Transverse colon (tissue), 4 donors: ENCODE measurements at regions of chr6 and their contacts with region 1.

Region 1: DNA sequence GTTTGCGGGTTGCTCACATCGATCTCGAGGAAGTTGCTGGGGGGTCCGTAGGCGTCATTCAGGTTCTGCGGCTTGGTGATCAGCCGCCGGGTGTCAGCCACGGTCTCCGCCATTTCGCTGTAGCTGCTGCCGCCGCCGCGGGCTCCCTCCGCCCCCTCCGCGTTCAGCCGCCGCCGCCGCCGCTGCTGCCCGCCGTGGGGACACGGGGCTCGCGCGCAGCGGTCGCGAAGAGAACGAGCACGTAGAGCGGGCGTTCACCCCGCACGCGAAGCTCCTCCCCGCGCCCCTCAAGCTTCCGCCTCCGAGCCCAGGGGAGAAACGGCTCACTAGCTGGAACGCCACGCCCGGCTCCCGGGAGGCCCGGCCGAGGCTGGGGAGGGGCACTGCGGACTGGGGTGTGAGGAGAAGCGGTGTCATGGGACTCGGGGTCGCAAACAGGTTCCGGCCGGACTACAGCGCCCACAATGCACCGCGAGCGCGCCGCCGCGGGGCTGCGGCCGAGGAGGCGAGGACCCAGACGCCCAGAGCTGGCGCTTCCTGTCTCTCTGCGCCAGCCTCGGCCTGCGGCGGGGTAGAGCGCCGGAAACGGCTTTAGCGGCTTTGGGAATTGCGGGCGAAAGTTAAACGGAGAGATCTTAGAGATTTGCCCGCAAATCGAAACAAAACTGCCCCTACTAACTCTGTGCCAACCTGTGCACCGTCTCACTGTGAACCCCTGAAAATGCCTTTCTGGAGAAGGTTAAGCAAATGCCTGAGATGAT is at the start of gene SNX3:
- DNase-seq: peak; percentile 98
- H3K4me3 ChIP-seq: peak within 1 kb of the TSS; percentile 60 to 99 (median 77)
- H3K27ac ChIP-seq: peak within 1 kb of the TSS; percentile 91 to 96 (median 94)
- H3K4me1 ChIP-seq: peaks cover 0 to 43% (median 17%) of the 10 kb centered on the region in 4 donors
- H3K27me3 ChIP-seq: no peaks in the 10 kb centered on the region
- CTCF ChIP-seq: no peak
- EP300 ChIP-seq: no peak
- POLR2A ChIP-seq: peak; percentile 81
- total RNA-seq, gene SNX3: 81.2 to 136 (median 121) TPM

Region 2: DNA sequence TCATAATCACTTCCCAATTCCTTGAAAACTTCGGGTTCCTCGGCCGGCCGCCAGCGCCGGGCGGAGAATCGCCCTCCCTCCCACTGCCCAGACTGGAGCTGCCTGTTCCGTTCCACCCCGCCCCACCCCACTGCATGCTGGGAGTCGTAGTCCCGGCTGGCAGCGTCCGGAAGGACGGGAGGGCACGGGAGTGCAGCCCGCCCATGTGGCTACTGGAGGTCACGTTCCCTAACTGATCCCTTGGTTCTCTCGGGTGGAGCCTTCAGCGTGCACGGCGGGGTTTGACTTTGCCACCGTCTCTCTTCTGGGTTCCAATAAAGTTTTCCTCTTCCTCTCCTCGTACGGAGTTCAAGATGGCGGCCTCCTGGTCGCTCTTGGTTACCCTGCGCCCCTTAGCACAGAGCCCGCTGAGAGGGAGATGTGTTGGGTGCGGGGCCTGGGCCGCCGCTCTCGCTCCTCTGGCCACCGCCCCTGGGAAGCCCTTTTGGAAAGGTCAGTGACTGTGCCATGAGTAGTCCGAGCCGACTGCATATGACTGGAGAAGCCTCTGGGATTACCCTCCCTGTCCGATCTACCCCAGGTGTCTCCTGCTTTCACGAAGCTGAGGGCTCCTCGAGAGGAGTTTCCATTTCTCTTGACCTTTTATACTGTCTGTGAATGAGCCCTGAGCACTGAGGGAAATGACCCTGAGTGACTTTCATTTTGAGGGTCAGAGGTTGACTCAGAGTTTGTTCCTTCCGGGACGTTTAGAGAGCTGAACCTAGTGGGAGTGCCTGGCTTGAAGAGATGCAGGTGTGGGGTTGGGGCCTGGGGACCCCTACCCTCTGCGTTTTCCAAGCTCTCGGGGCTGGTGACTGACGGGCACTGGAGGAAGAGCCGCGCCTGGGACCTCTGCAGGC is 34.0 kb after region 1 on chr6 and contains the start of gene AFG1L:
- in situ Hi-C with region 1: no loop called
- intact Hi-C with region 1: loop called (anchors 5 kb)
- DNase-seq: peak; percentile 94
- H3K4me3 ChIP-seq: peak within 1 kb of the TSS; percentile 60 to 97 (median 70)
- H3K27ac ChIP-seq: peak within 1 kb of the TSS; percentile 90 to 99 (median 92)
- H3K4me1 ChIP-seq: peaks cover 6 to 27% (median 8%) of the 10 kb centered on the region in 4 donors
- H3K27me3 ChIP-seq: no peaks in the 10 kb centered on the region
- CTCF ChIP-seq: no peak
- EP300 ChIP-seq: no peak
- POLR2A ChIP-seq: peak; percentile 80
- total RNA-seq, gene AFG1L: 2.2 to 22.5 (median 5.5) TPM